AG04450 (cell line): ENCODE measurements at regions of chr3 and their contacts with region 1.

Region 1: GRCh38 chr3:157493627-157494550 is 9.3 kb downstream of the VEPH1 start:
- DNase-seq: no peak
- H3K4me3 ChIP-seq: no peak overlapping the region
- H3K27ac ChIP-seq: no peak overlapping the region
- H3K27me3 ChIP-seq: no peaks in the 10 kb centered on the region
- CTCF ChIP-seq: peak; percentile 74

Region 2: DNA sequence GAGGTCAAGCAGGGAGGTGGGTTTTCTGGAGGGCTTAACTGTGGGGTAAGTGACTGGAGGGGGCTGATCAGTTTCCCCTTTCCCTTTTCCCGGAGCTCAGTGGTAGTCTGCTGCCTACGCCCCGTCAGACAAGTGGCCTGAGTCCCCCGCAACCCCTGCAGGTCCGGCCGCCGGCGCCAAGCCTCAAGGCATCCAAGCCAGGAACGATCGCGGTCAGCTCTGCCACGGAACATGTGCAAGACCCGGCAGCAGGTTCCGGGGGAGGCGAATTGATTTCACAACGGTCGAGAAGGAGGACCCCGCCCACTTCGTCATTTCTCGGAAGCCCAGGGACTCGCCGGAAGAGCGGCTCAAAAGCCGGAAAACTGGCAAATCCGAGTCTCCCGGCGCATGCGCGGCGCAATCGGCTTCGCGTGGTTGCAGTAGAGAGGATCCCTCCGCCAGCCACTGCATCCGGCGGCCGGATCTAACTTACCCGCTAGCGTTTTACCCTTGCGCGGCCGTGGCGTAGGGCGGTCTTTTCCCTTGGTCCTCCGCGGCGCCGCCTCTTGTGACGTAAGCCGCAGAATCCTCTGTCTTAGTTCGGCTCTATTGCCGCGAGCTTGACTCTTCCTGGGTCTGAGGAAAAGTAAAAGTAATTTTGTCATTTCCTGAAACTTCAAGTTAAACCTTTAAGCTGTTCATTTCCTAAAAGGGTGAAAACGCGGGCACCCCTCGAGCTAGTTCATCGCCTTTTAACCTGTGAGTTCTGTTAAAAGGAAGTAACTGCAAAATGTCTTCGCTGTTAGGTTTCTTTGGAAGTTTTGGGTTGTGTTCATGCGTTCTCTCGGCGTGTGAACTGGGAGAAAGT is 319.0 kb before region 1 on chr3:
- CTCF ChIA-PET with region 1: interaction called, 13 read pairs
- POLR2A ChIA-PET with region 1: no interaction called
- DNase-seq: peak; percentile 100
- H3K4me3 ChIP-seq: peak overlapping the region; percentile 77
- H3K27ac ChIP-seq: peak overlapping the region; percentile 98
- H3K27me3 ChIP-seq: no peaks in the 10 kb centered on the region
- CTCF ChIP-seq: no peak

Region 3: GRCh38 chr3:157436583-157437291 is 57.2 kb before region 1 on chr3 and contains the start of gene PTX3:
- CTCF ChIA-PET with region 1: interaction called, 11 read pairs
- POLR2A ChIA-PET with region 1: interaction called, 3 read pairs
- DNase-seq: peak; percentile 81
- H3K4me3 ChIP-seq: peak within 1 kb of the TSS; percentile 75
- H3K27ac ChIP-seq: peak within 1 kb of the TSS; percentile 47
- H3K27me3 ChIP-seq: no peaks in the 10 kb centered on the region
- CTCF ChIP-seq: no peak
- polyA plus RNA-seq, gene PTX3: 210 and 235 TPM in 2 replicates

Region 4: GRCh38 chr3:157475921-157476414 is 17.9 kb before region 1 on chr3:
- CTCF ChIA-PET with region 1: interaction called, 17 read pairs
- POLR2A ChIA-PET with region 1: no interaction called
- DNase-seq: peak; percentile 45
- H3K4me3 ChIP-seq: no peak overlapping the region
- H3K27ac ChIP-seq: peak overlapping the region; percentile 41
- H3K27me3 ChIP-seq: no peaks in the 10 kb centered on the region
- CTCF ChIP-seq: no peak

Region 5: DNA sequence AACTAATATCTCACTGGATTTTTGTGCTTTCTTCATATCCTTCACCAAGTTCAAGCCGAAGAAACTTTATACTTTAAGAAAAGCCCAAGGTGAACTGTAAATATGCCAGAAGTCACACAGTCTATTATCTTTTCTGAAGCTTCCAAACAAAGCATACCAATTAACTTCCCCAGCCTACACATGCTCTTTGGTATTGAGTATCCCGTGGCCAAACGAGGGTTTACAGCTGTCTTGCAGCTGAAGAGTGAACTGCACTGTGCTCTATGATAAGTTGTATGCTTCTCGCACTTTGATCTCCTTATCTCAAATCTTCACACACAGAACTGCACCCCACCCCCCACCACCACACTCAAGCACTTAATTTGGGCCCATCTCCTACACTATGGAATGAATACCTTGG is 224.9 kb after region 1 on chr3:
- CTCF ChIA-PET with region 1: no interaction called
- POLR2A ChIA-PET with region 1: no interaction called
- DNase-seq: no peak
- H3K4me3 ChIP-seq: no peak overlapping the region
- H3K27ac ChIP-seq: no peak overlapping the region
- H3K27me3 ChIP-seq: peaks cover 2% of the 10 kb centered on the region
- CTCF ChIP-seq: no peak